Posterior vena cava (tissue), 2 donors: ENCODE measurements at regions of chr1 and their contacts with region 1.

Region 1: GRCh38 chr1:15304701-15305467 is 57.9 kb downstream of the FHAD1 start:
- DNase-seq: peak; percentile 86

Region 2: GRCh38 chr1:13775459-13775858 is 1529.4 kb before region 1 on chr1:
- intact Hi-C with region 1: no loop called
- DNase-seq: no peak

Region 3: DNA sequence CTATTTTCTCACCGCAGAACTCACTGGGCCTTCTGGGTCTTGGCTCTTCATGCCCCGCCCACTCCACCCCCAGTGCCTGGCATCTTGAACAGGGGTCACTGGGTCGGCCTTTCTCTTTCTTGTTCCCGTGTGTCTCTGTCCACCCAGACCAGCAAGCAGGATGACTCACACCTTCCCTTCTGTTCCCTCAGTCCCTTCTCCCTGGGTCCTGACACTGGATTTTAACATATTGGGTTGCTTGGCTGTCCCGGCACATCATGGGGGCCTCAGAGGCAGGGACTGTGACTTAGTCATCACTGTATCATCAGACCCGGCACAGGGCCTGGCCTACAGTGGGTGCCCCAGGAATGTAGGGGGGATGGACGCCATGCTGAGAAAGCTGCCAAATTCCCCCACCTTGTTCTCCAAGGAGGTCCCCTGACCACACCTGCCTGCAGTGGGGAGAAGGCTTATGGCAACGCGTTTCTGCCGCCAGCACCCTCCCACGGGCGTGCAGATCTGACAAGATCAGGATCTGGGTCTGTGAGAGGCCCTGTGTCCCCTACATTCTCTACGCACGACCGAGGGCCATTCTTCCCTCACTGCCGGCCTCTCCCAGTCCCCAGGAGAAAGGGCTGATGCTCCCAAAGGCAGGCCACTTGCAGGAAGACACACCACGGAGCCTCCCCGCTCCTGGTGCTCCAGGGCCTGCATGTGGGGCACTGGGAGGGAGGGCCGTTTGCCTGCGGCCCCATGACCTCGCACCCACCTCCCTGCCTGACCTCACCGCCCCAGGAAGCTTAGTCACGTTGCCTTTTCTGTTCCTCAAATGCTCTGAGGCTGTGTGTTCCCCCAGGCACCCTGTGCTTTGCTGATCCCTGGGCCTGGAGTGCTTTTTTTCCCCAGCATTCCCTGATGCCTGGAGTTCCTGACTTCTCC is 308.5 kb before region 1 on chr1:
- intact Hi-C with region 1: no loop called
- DNase-seq: no peak

Region 4: DNA sequence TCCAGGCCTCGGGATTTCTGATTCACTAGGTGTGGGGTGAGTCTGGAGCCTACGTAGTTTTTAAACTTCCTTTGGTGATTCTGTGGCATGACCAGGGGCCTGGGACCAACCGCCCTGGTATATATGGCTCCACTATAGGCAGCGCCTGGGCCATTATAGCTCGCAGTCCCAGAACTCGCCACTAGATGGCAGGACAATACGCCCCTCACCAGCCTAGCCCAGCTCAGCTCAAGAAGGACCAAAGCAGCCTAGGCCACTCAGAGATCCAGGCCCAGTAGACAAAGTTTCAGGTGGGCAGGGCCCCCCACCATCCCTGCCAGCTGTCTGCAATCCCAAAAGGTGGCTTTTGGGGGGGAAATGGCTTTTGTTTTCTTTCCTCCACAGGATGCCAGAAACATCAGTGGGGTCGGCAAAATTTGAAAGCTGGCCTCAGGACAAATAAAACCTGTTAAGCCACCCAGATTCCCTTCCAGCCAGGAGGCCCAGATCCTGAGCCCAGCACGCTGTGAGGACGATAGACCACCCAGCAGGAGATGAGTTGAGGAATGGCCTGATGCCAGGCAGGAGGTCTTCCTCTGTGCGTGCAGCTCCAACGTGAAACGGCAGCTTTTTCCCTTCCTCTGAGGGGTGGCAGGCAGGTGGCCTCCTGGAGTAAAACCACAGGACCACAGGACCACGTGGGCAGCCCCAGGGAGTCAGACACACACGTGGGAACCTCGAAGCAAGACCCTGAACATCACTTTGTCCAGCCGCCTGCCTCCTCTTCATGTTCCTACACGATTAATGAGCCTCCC is 176.2 kb before region 1 on chr1:
- intact Hi-C with region 1: loop called in 1 of 2 experiments (anchors 1 kb)
- DNase-seq: peak; percentile 87